ENCODE measurements at regions of chr10 and their contacts with region 1.

Region 1: GRCh38 chr10:110279407-110279986 is 25.2 kb downstream of the SMNDC1 start:
- DNase-seq: peak; percentile 81
- H3K4me3 Mint-ChIP-seq: no peak overlapping the region
- H3K27ac Mint-ChIP-seq: no peak overlapping the region
- H3K4me1 Mint-ChIP-seq: peaks cover 11% of the 10 kb centered on the region
- H3K27me3 Mint-ChIP-seq: peaks cover 13% of the 10 kb centered on the region

Region 2: GRCh38 chr10:110241407-110241806 is 38.1 kb before region 1 on chr10:
- intact Hi-C with region 1: loop called (anchors 5 kb)
- DNase-seq: no peak
- H3K4me3 Mint-ChIP-seq: no peak overlapping the region
- H3K27ac Mint-ChIP-seq: no peak overlapping the region
- H3K4me1 Mint-ChIP-seq: peaks cover 18% of the 10 kb centered on the region
- H3K27me3 Mint-ChIP-seq: peaks cover 28% of the 10 kb centered on the region

Region 3: DNA sequence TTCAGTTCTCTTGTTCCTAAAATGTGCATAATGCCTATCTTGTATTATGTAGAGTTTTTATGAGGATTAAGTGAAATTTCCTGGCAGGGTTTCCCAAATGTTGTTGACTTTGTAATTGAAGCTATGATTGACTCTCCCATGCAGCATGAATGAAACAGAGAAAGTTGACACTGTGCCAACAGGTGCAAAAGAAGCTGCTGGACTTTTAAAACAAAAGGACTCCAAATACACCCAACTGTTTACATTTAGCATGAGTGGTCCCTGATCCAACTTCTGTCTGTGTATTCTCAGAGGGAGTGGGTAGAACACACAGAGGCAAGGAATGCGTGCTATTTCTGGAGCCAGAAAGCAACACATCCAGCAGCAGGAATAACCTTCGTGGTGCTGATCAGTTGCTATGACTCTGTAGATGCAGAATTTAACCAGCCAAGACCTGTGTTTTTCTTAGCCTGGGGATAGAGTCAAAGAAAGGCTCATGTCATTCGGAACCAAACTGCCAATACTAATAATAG is 350.2 kb after region 1 on chr10:
- intact Hi-C with region 1: no loop called
- DNase-seq: peak; percentile 22
- H3K4me3 Mint-ChIP-seq: no peak overlapping the region
- H3K27ac Mint-ChIP-seq: no peak overlapping the region
- H3K4me1 Mint-ChIP-seq: no peaks in the 10 kb centered on the region
- H3K27me3 Mint-ChIP-seq: peaks cover 16% of the 10 kb centered on the region